Vagina (tissue), 2 donors: ENCODE measurements at regions of chr5 and their contacts with region 1.

Region 1: DNA sequence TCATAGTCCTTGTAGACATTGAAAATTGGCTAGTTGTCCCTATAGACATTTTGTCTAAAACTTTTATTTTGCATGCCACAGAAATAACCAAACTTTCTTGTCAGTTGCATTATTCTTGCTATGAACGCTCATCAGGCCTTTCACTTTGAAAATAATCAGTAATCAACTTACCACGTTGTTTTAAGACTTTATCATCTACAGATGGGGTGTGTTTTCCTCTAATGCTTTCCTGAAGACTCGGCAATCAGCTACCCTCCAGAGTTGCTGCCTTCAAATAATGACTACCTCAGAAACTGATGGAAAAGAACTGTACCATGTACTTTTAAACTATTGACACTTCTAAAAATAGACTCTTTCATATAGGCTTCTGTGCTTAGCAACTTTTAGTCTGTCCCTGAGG is 33.5 kb upstream of the HSPB3 start:
- DNase-seq: no peak
- H3K4me3 ChIP-seq: no peak overlapping the region
- H3K27ac ChIP-seq: no peak overlapping the region
- H3K4me1 ChIP-seq: no peaks in the 10 kb centered on the region
- H3K27me3 ChIP-seq: no peaks in the 10 kb centered on the region
- CTCF ChIP-seq: no peak
- POLR2A ChIP-seq: no peak

Region 2: GRCh38 chr5:54249210-54250028 is 172.6 kb before region 1 on chr5:
- intact Hi-C with region 1: loop called (anchors 5 kb)
- DNase-seq: no peak
- H3K4me3 ChIP-seq: no peak overlapping the region
- H3K27ac ChIP-seq: no peak overlapping the region
- H3K4me1 ChIP-seq: no peaks in the 10 kb centered on the region
- H3K27me3 ChIP-seq: no peaks in the 10 kb centered on the region
- CTCF ChIP-seq: no peak
- POLR2A ChIP-seq: no peak

Region 3: GRCh38 chr5:54517174-54518092 is 95.5 kb after region 1 on chr5 and contains the start of gene SNX18:
- intact Hi-C with region 1: no loop called
- DNase-seq: no peak
- H3K4me3 ChIP-seq: peak within 1 kb of the TSS; percentile 78 to 93
- H3K27ac ChIP-seq: peak within 1 kb of the TSS; percentile 96
- H3K4me1 ChIP-seq: peaks cover 30% of the 10 kb centered on the region
- H3K27me3 ChIP-seq: no peaks in the 10 kb centered on the region
- CTCF ChIP-seq: peak; percentile 90 to 98 (median 97)
- POLR2A ChIP-seq: peak in 1 of 2 donors; percentile 78
- total RNA-seq, gene SNX18: 63.1 TPM